ENCODE measurements at regions of chr12 and their contacts with region 1.

Region 1: DNA sequence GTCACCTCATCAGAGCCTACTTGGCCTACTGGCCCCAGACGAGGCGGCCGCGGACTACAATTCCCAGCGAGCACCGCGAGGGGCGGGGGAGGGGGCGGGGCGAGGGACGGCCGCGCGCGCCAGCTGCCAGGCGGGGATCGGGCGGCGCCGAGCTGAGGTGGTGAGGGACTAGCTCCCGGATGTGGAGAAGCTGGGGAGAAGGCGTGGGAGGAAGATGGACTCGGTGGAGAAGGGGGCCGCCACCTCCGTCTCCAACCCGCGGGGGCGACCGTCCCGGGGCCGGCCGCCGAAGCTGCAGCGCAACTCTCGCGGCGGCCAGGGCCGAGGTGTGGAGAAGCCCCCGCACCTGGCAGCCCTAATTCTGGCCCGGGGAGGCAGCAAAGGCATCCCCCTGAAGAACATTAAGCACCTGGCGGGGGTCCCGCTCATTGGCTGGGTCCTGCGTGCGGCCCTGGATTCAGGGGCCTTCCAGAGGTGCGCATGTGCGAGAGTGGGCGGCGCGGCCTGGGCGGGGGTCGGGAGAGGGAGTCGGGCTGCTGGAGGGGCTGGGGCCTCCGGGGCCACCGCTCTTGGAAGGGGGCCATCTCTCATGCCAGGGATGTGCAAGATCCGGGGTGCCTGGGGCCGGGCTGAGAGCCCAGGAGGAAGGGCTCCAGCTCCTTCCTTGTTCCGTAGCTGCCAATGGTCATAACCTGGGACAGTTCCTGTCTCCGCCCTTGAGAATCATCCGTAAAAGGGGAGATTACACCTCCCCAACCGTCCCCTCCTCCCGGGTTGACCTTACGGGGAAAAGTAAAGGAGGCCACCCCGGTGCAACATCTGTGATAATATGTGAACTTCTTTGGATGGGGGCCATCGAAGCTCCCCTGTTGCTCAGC is at the start of gene CMAS:
- H3K4me3 Mint-ChIP-seq: peak within 1 kb of the TSS; percentile 92
- H3K27ac Mint-ChIP-seq: peak within 1 kb of the TSS; percentile 73
- H3K4me1 Mint-ChIP-seq: peaks cover 34% of the 10 kb centered on the region
- H3K27me3 Mint-ChIP-seq: no peaks in the 10 kb centered on the region

Region 2: DNA sequence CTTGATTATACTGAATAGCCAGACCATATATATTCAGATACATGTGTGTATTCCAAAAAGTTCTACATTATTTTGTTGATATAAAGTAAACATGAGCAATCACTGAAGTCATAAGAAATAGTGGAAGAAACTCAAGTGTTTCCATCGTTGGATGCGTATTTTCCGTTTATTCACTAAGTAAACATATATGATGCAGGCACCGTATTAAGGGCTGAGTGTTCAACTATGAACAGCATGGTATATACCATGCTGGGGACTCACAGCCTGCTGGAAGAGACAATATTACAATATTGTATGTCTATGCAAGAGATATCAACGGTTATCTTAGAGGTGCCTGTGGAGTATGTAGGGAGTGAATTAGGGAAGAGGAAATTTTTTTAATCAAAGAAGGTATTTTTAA is 607.7 kb before region 1 on chr12:
- intact Hi-C with region 1: loop called (anchors 10 kb)
- H3K4me3 Mint-ChIP-seq: peak overlapping the region; percentile 95
- H3K27ac Mint-ChIP-seq: peak overlapping the region; percentile 96
- H3K4me1 Mint-ChIP-seq: peaks cover 31% of the 10 kb centered on the region
- H3K27me3 Mint-ChIP-seq: peaks cover 16% of the 10 kb centered on the region

Measured in dendritic cell treated with granulocyte-macrophage colony-stimulating factor and Interleukin-4, amounts not matched to agents 40 ng/mL and 50 ng/mL, for 4 days (primary cell).